SK-N-SH (cell line): ENCODE measurements at regions of chr1 and their contacts with region 1.

Region 1: DNA sequence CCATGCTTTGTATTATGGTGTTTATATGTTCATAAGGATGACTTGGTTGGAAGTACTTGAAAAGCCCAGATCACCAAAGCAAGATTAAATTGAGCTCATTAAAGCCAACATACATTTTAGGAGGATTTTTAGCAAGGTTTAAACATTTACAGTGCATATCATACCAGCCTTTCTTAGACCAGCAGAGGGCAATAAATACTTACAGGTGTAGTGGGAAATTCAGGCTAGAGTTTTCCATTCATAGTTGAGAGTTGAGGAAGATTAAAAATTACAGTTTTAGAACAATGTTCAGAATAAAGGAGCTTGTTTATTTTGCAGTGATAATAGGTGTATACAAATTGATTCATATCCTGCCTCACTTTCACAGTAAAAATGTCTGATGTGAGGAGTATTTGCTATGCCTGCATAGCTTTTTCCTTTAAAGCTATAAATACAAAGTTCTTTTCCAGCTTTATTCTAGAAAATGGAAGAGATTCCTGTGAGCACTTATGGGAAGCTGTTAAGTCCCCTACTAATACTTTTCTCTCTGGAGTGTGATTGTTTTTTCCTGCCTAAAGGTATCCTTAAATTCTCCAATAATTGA is 35.3 kb downstream of the DTL start:
- DNase-seq: peak; percentile 15
- H3K4me3 ChIP-seq: no peak overlapping the region; a peak in 1 of 4 replicates
- H3K27ac ChIP-seq: no peak overlapping the region
- H3K4me1 ChIP-seq: no peaks in the 10 kb centered on the region
- H3K27me3 ChIP-seq: no peaks in the 10 kb centered on the region
- CTCF ChIP-seq: peak; percentile 85
- EP300 ChIP-seq: no peak
- RAD21 ChIP-seq: peak; percentile 89

Region 2: DNA sequence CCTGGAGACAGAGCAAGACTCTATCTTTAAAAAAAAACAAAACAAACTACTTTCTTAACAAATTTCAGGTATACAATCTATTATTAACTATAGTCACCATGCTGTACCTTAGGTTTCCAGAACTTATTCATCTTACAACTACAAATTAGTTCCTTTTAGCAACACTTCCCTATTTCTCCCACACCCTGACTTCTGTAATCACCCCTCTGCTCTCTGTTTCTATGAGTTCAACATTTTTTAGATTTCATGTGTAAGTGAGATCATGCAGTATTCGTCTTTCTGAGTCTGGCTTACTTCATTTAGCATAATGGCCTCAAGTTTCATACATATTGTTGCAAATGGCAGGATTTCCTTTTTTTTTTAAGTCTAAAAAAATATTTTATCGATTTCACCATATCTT is 162.4 kb before region 1 on chr1:
- CTCF ChIA-PET with region 1: no interaction called
- POLR2A ChIA-PET with region 1: no interaction called
- DNase-seq: no peak
- H3K4me3 ChIP-seq: no peak overlapping the region
- H3K27ac ChIP-seq: no peak overlapping the region
- H3K4me1 ChIP-seq: no peaks in the 10 kb centered on the region
- H3K27me3 ChIP-seq: no peaks in the 10 kb centered on the region
- CTCF ChIP-seq: no peak
- EP300 ChIP-seq: no peak
- RAD21 ChIP-seq: no peak

Region 3: DNA sequence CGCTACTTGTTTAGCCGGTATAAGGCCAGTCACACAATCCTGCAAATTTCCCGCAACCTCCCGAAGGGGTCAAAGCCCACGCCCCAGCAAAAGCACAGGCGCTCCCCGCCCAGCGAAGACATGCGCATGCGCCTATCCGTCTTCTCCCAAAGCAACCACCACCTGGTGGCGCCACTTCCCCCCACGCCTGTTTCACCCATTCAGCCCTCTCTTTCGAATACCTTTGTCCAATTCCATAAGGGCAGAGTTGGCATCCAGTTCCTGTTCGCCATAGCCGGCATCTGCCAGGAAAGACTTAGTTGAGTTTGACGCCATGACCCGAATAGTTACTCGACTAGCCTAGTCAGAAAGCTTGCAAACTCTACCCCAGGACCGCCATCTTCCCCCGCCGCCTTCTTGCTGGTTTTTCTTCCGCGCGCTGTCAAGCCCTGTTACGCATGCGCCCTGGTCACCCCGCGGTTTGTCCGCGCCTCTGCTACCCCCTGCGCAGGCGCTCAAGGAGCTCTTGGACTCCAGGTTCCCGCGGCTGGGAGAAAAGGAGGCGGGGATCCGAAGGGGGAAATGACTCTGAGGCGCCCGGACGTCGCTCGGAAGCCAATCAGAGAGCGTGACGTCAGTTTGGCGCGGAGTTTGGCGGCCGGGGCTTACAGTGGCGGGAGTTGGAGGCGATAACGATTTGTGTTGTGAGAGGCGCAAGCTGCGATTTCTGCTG is 35.5 kb before region 1 on chr1 and contains the starts of genes DTL and INTS7:
- CTCF ChIA-PET with region 1: interaction called, 14 read pairs
- POLR2A ChIA-PET with region 1: no interaction called
- DNase-seq: peak; percentile 94
- H3K4me3 ChIP-seq: peak within 1 kb of the TSS; percentile 89 to 99
- H3K27ac ChIP-seq: peak within 1 kb of the TSS; percentile 81 to 93
- H3K4me1 ChIP-seq: peaks cover 18 to 22% of the 10 kb centered on the region in 2 experiments; a peak in 3 of 4 replicates
- H3K27me3 ChIP-seq: no peaks in the 10 kb centered on the region
- CTCF ChIP-seq: peak; percentile 92
- EP300 ChIP-seq: peak in 1 of 2 experiments; percentile 27; a peak in 1 of 4 replicates
- RAD21 ChIP-seq: no peak
- polyA plus RNA-seq, gene DTL: 9.3 and 12.6 TPM in 2 replicates
- polyA plus RNA-seq, gene INTS7: 8.7 and 11.7 TPM in 2 replicates

Region 4: GRCh38 chr1:212089560-212090163 is 18.9 kb after region 1 on chr1:
- CTCF ChIA-PET with region 1: interaction called, 16 read pairs
- POLR2A ChIA-PET with region 1: no interaction called
- DNase-seq: no peak
- H3K4me3 ChIP-seq: no peak overlapping the region
- H3K27ac ChIP-seq: no peak overlapping the region
- H3K4me1 ChIP-seq: peaks cover 4 to 9% of the 10 kb centered on the region in 2 experiments; a peak in 3 of 4 replicates
- H3K27me3 ChIP-seq: no peaks in the 10 kb centered on the region
- CTCF ChIP-seq: no peak
- EP300 ChIP-seq: no peak
- RAD21 ChIP-seq: no peak

Region 5: GRCh38 chr1:212284744-212285684 is 214.2 kb after region 1 on chr1 and contains the start of gene PPP2R5A:
- CTCF ChIA-PET with region 1: interaction called, 103 read pairs
- POLR2A ChIA-PET with region 1: no interaction called
- DNase-seq: peak; percentile 98
- H3K4me3 ChIP-seq: peak within 1 kb of the TSS; percentile 96
- H3K27ac ChIP-seq: peak within 1 kb of the TSS; percentile 77 to 89
- H3K4me1 ChIP-seq: peaks cover 12 to 18% of the 10 kb centered on the region in 2 experiments; a peak in 3 of 4 replicates
- H3K27me3 ChIP-seq: no peaks in the 10 kb centered on the region
- CTCF ChIP-seq: peak; percentile 46
- EP300 ChIP-seq: peak in 1 of 2 experiments; percentile 40; a peak in 1 of 4 replicates
- RAD21 ChIP-seq: no peak
- polyA plus RNA-seq, gene PPP2R5A: 5.4 and 6.1 TPM in 2 replicates

Region 6: DNA sequence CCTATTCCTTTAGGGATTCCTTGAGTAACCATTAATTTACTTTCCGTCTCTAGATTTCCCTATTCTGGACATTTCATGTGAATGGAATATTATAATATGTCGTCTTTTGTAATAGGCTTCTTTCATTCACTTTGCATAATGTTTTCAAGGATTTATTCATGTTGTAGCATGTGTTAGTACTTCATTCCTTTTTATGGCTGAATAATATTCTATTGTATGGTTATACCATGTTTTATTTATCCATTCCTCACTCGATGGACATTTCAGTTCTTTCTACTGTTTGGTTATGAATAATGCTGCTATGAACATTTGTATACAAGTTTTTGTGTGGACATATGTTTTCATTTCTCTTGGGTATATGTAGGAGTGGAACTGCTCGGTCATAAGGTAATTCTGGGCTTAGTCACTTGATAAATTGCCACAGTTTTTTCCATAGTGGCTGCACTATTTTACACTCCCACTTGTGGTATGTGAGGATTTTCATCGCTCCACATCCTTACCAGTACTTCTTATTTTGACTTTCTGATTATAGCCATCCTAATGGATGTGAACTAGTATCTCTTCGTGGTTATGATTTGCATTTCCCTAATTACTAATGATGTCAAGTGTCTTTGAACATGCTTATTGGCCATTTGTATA is 232.1 kb after region 1 on chr1:
- CTCF ChIA-PET with region 1: interaction called, 11 read pairs
- POLR2A ChIA-PET with region 1: no interaction called
- DNase-seq: no peak
- H3K4me3 ChIP-seq: no peak overlapping the region
- H3K27ac ChIP-seq: no peak overlapping the region
- H3K4me1 ChIP-seq: peaks cover 0 to 7% of the 10 kb centered on the region in 2 experiments; a peak in 2 of 4 replicates
- H3K27me3 ChIP-seq: no peaks in the 10 kb centered on the region
- CTCF ChIP-seq: no peak
- EP300 ChIP-seq: no peak
- RAD21 ChIP-seq: no peak

Region 7: DNA sequence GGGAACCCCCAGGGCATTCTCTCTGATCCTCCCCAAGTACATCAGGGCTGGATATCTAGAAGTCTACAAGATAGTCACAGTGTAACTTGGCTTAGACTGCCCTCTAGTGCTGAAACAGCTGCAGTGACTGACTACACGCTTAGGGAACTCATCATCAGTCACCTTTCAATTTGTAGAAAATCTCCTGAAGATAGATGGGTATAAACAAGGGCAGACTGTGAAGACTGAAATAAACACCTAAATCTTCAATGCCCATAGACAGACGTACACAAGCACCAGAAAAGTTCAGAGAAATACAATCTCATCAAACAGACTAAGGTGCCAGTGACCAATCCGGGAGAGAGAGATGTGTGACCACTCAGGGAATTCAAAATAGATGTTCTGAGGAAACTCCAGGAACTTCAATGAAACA is 297.3 kb after region 1 on chr1:
- CTCF ChIA-PET with region 1: interaction called, 42 read pairs
- POLR2A ChIA-PET with region 1: interaction called, 3 read pairs
- DNase-seq: peak; percentile 60
- H3K4me3 ChIP-seq: no peak overlapping the region
- H3K27ac ChIP-seq: no peak overlapping the region
- H3K4me1 ChIP-seq: no peaks in the 10 kb centered on the region
- H3K27me3 ChIP-seq: no peaks in the 10 kb centered on the region
- CTCF ChIP-seq: peak; percentile 87
- EP300 ChIP-seq: no peak
- RAD21 ChIP-seq: peak; percentile 82